ENCODE measurements at regions of chr4 and their contacts with region 1.

Region 1: DNA sequence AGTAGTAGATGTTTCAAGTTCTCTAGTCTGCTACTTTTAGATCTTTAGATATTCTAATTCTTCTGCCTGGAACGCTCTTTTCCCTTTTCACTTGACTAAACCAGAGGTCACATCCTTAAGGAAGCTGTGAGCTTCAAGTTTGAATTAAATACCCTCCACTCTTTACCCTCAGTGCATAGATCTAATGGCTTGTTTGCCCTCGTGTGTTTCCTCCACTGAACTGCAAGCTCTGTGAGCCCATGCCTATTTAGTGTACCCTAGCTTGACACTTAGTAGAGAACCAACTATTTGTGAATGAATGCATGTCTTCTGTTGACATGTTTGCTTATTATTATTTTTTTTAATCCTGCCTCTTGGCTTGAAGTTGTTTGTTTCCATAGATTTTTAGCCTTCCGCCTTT is 138.3 kb downstream of the PDE5A start:
- DNase-seq: peak; percentile 72
- H3K4me3 ChIP-seq: no peak overlapping the region
- H3K27ac ChIP-seq: no peak overlapping the region
- H3K4me1 ChIP-seq: no peaks in the 10 kb centered on the region
- H3K27me3 ChIP-seq: no peaks in the 10 kb centered on the region
- CTCF ChIP-seq: peak; percentile 11 to 53
- POLR2A ChIP-seq: no peak

Region 2: GRCh38 chr4:119580303-119580702 is 90.0 kb after region 1 on chr4:
- CTCF ChIA-PET with region 1: no interaction called
- POLR2A ChIA-PET with region 1: no interaction called
- dilution Hi-C with region 1: no loop called
- intact Hi-C with region 1: no loop called
- DNase-seq: no peak
- H3K4me3 ChIP-seq: no peak overlapping the region
- H3K27ac ChIP-seq: no peak overlapping the region
- H3K4me1 ChIP-seq: no peaks in the 10 kb centered on the region
- H3K27me3 ChIP-seq: no peaks in the 10 kb centered on the region
- CTCF ChIP-seq: no peak
- POLR2A ChIP-seq: no peak

Region 3: GRCh38 chr4:120056246-120056645 is 565.9 kb after region 1 on chr4:
- CTCF ChIA-PET with region 1: interaction called, 10 read pairs
- POLR2A ChIA-PET with region 1: no interaction called
- dilution Hi-C with region 1: no loop called
- intact Hi-C with region 1: no loop called
- DNase-seq: peak; percentile 19
- H3K4me3 ChIP-seq: no peak overlapping the region
- H3K27ac ChIP-seq: no peak overlapping the region
- H3K4me1 ChIP-seq: no peaks in the 10 kb centered on the region
- H3K27me3 ChIP-seq: no peaks in the 10 kb centered on the region
- CTCF ChIP-seq: no peak
- POLR2A ChIP-seq: no peak

Measured in endothelial cell of umbilical vein (primary cell).